ENCODE measurements at regions of chr11 and their contacts with region 1.

Region 1: GRCh38 chr11:128290106-128290840 is 297.1 kb downstream of the ETS1 start:
- DNase-seq: peak; percentile 69
- H3K4me3 Mint-ChIP-seq: peak overlapping the region; percentile 84
- H3K27ac Mint-ChIP-seq: peak overlapping the region; percentile 95
- H3K4me1 Mint-ChIP-seq: peaks cover 93% of the 10 kb centered on the region
- H3K27me3 Mint-ChIP-seq: no peaks in the 10 kb centered on the region

Region 2: DNA sequence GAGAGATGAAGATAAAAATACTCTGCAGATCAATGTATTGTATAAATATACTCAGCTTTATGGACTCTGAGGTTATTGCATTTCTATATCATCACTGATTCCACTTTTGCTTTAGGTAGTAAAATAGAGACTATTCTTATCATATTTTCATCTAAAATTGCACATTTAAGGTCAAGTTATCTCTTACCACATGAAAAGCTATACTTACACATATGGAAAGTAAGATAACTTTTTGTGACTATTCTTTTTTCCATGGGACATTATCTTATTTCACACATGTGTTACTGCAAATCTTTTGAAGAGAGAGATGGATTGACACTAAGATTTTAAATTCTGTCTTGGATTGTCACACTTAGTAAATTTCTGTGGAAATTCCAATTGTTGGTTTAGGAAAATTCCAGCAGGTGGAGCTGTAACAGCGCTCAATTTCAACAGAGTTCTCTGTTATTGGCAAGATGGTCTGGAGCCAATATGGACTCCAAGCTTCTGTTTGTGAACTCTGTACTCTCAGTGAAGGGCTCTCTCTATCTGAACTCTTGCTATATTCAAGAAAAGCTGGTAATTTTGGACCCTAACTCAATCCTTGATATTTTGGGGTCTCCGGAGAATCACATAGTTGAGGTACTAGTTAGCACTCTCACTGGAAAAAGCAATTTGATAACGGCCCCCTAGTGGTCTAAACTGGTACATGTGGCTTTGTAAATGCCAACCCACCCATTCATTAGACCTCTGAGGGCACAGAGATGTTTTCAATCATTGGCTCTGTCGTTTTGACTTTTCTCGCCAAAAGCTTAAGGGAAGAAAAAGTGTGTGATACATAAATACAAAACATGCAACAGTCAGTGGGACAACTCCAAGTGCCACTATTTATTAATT is 132.6 kb before region 1 on chr11:
- intact Hi-C with region 1: loop called (anchors 1 kb)
- DNase-seq: peak; percentile 39
- H3K4me3 Mint-ChIP-seq: no peak overlapping the region
- H3K27ac Mint-ChIP-seq: peak overlapping the region; percentile 81
- H3K4me1 Mint-ChIP-seq: peaks cover 26% of the 10 kb centered on the region
- H3K27me3 Mint-ChIP-seq: no peaks in the 10 kb centered on the region

Region 3: DNA sequence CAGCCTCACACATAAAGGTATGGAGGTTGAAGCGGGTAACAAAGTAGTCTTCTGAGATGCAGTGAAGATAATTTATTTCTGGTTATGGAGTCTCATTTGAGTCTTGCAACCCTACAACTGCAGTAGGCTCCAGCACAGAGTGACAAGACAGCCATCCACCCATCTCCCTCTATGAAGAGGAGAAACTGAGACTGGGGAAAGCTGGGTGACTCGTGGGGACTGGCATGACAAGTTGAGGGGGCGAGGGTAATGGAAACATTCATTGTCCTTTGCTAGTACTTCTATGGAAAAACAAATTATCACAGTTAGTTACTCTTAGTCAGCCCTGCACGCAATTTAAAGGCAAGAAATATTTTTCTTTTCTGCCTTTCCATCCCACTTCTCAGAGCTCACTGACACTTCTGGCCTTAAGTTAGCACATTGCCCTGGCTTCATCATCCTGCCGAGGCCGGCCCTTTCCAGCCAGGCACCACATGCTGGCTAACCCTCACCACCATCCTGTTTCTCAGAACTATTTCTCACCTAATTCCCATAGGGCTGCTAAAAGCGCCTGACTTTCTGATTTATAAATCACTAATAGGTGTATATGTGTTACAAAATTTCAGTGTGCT is 64.1 kb before region 1 on chr11:
- intact Hi-C with region 1: loop called (anchors 1 kb)
- DNase-seq: no peak
- H3K4me3 Mint-ChIP-seq: peak overlapping the region; percentile 53
- H3K27ac Mint-ChIP-seq: peak overlapping the region; percentile 97
- H3K4me1 Mint-ChIP-seq: peaks cover 49% of the 10 kb centered on the region
- H3K27me3 Mint-ChIP-seq: no peaks in the 10 kb centered on the region

Region 4: DNA sequence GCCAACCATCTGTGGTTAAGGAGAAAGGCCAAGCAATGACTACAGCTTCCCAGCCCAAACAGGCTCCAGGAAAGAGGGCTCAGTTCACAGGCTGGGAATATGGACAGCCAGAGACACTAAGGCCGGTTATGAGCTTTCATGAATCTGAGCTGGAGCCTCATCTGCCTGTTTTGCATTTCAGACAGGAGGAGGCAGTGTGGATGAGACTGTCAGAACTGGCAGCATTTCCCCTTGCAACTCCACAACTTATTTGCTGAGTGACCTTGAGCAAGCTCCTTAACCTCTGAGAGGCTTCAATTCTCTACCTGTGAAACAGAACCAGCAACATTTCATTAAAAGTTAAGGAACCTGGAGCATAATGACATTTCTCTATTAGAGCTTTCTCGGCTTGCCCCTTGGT is 33.1 kb after region 1 on chr11:
- intact Hi-C with region 1: loop called (anchors 1 kb)
- DNase-seq: peak; percentile 44
- H3K4me3 Mint-ChIP-seq: peak overlapping the region; percentile 62
- H3K27ac Mint-ChIP-seq: peak overlapping the region; percentile 94
- H3K4me1 Mint-ChIP-seq: peaks cover 81% of the 10 kb centered on the region
- H3K27me3 Mint-ChIP-seq: no peaks in the 10 kb centered on the region

Region 5: DNA sequence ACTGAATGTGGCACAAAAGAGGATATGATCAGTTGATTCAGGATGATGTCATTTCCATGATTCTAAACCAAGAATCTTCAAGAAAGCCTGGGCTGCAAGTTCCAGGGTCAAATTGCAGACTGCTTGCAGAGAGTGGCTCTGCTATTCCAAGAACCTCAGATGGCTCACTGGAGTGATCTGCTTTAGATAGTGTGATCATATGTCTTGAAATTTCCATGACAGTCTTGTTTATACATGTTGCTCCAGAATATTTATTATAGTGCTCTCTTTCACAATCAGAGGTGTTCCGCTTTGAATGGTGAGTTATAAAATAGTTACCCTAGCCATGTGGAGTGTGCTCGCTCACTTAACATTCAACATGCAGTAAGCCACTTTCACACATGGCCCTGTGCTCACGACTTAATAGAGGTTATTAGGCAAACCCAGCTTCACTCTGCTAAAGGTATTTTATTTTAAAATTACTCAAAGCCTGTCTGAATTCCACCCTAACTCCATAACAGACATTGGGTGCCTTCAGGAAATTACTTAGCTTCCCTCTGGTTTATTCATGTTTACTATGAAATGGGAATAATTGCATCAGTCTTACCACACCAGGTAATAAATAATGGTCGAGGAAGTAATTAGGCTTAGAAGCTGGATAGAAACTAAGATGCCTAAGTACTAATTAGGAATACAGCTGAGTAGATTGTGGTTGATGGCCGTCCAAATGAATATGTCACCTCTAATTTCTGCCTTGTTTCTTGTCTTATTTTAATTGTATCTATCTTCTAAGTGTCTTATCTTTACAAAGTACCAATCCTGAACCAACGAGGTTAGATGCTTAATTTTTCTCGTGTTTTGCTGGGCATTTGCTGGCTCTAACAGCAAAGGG is 109.2 kb after region 1 on chr11:
- intact Hi-C with region 1: no loop called
- DNase-seq: no peak
- H3K4me3 Mint-ChIP-seq: no peak overlapping the region
- H3K27ac Mint-ChIP-seq: no peak overlapping the region
- H3K4me1 Mint-ChIP-seq: peaks cover 16% of the 10 kb centered on the region
- H3K27me3 Mint-ChIP-seq: no peaks in the 10 kb centered on the region

Region 6: DNA sequence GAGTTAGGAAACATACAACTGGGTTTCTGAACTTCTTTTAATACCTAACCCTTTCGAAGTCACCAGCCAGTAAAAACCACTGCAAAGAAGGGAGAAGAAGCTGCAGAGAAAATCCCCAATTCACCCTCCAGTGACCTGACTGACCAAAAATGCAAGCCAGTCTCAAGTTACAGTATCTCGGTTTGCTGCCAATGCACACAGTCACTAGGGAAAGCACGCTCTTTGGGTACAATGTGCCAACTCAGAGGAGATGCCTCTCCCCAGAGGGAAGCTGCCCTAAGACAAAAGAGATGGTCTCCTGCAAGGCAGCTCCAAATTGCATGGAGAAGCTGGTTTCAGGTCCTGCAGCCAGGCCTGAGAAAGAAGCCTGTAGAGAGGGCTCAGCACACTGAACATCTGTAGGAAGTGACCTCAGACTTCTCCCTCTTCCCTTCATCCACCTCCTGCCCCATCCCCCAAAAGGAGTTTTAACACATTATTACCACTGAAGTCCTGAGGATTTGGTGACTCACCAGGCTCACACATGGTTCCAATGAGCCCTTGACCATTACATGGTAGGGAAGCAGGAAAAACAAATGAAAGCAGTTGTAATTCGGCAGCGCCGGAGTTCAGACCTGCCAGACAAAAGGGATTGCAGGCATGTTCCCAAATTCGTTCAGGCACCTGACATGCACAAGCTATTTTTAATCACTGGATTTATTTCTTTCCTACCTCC is 206.9 kb after region 1 on chr11:
- intact Hi-C with region 1: loop called (anchors 2 kb)
- DNase-seq: no peak
- H3K4me3 Mint-ChIP-seq: peak overlapping the region; percentile 57
- H3K27ac Mint-ChIP-seq: peak overlapping the region; percentile 94
- H3K4me1 Mint-ChIP-seq: peaks cover 94% of the 10 kb centered on the region
- H3K27me3 Mint-ChIP-seq: no peaks in the 10 kb centered on the region

Region 7: DNA sequence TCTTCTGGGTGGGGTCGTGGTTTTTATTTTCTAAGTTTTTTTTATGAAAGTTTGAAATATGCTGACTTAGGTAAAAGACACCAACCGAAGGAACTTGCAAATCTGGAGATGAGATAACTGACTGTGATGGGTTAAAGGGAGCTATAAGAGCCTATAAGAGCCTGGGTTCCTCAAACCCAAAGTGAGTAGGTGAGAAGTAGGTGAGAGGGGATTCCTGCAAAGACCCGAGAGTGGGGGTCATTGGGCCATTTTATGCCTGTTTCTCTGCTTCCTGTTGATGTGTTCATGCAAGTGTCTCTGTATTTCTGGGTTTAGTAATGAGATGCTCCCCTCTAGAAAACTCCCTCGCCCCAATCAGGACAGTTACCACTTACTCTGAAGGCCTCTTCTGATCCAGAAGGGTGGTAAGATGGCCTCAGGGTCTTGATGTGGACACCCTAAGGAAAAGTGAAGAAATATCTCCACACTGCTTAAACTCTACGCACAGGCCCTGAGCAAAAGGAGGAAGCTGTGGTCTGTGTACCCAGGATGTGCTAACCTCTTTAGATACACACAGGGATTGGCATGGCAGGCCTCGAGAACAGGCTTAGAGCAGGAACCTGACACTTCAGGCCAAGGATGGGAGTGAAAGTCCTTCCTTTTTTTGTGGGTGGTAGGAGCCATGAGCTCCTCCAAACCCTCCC is 405.4 kb after region 1 on chr11:
- intact Hi-C with region 1: loop called (anchors 5 kb)
- DNase-seq: no peak
- H3K4me3 Mint-ChIP-seq: peak overlapping the region; percentile 80
- H3K27ac Mint-ChIP-seq: peak overlapping the region; percentile 87
- H3K4me1 Mint-ChIP-seq: peaks cover 63% of the 10 kb centered on the region
- H3K27me3 Mint-ChIP-seq: peaks cover 15% of the 10 kb centered on the region